Activated T-helper 2 cell treated with anti-CD3 and anti-CD28 coated beads, Interferon-gamma antibody, Interleukin-2, Interleukin-4, amounts not matched to agents 10 μg/mL and 5 μg/mL and 100 μg/mL, durations not matched to agents 14 hours and 24 hours and 36 hours (primary cell): ENCODE measurements at regions of chr13 and their contacts with region 1.

Region 1: DNA sequence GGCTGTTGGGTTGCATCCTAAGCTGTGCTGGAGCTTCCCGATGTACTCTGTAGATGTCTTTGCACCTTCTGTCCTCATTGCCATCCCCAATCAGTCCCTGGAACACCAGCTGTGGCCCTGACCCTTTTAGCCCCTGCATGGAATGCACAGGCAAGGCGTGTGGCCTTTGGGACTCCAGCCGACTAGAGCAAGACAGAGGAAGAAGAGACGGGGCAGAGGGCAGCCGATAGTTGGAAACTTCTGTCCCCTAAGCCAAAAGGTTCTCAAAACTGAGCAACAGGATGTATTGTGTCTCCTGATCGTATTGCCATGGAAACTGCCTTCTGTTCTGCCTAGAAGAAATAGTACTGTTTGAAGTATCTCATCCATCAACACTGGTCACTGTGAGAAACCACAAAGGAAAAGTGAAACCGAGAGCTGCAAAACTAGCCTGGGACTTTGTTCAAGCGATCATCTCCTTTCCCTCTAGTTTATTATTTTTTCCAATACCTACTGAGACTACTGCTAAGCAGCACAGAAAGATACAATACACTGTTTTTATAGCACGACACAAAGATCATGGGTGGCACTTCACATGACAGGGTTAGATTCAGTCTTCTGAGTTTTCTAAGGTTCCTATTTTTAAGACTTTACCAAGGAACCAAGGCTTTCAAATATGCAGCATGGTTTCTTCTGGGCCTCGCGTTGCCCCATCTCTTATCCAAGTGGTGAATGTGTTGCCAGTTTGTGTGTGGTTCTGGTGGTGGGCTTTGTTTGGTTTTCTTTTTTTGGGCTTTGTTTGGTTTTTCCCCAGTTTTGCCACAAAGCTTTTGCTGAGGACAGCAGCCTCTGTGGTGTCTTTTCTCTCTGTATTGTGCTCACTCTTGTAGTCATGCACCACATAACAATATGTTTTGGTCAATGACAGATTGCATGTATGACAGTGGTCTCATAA is 49.2 kb upstream of the GPR183 start:
- DNase-seq: peak; percentile 74
- H3K4me3 Mint-ChIP-seq: peak overlapping the region; percentile 50
- H3K27ac Mint-ChIP-seq: peak overlapping the region; percentile 98
- H3K4me1 Mint-ChIP-seq: peaks cover 92% of the 10 kb centered on the region
- H3K27me3 Mint-ChIP-seq: no peaks in the 10 kb centered on the region

Region 2: GRCh38 chr13:99153219-99153618 is 203.2 kb before region 1 on chr13:
- intact Hi-C with region 1: no loop called
- DNase-seq: no peak
- H3K4me3 Mint-ChIP-seq: no peak overlapping the region
- H3K27ac Mint-ChIP-seq: no peak overlapping the region
- H3K4me1 Mint-ChIP-seq: peaks cover 11% of the 10 kb centered on the region
- H3K27me3 Mint-ChIP-seq: no peaks in the 10 kb centered on the region

Region 3: DNA sequence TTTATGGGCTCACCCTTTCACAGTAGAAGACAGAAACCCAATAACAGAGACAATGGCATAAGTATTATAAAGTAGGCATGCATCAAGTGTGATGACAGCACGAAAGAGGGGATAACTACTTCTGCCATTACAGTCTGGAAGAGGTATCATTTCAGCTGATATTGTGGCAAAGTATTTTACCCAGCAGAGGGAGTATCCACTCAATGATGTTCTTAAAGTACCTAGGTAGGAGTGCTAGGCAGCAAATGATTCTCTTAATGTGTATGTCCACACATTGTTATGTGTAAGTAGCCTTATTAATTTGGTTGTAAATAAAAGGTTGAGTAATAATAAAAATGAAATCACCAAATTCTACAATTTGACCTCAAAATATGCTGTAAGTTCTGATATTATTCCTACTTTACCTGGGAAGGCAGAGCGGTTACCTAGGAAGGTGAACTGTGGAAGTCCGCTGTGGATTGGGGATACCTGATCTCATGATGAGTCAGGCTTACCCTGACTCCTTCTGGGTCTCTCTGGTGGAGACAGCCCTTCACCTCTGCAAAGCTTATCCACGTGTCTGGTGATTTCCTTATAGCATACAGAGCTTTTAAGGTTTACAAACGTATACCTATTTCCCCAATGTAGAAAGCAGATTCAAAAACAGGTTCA is 159.8 kb before region 1 on chr13:
- intact Hi-C with region 1: no loop called
- DNase-seq: no peak
- H3K4me3 Mint-ChIP-seq: no peak overlapping the region
- H3K27ac Mint-ChIP-seq: no peak overlapping the region
- H3K4me1 Mint-ChIP-seq: peaks cover 26% of the 10 kb centered on the region
- H3K27me3 Mint-ChIP-seq: no peaks in the 10 kb centered on the region

Region 4: GRCh38 chr13:99214232-99214631 is 142.2 kb before region 1 on chr13:
- intact Hi-C with region 1: loop called (anchors 2 kb)
- DNase-seq: no peak
- H3K4me3 Mint-ChIP-seq: peak overlapping the region; percentile 67
- H3K27ac Mint-ChIP-seq: peak overlapping the region; percentile 93
- H3K4me1 Mint-ChIP-seq: peaks cover 61% of the 10 kb centered on the region
- H3K27me3 Mint-ChIP-seq: no peaks in the 10 kb centered on the region

Region 5: GRCh38 chr13:99288089-99288488 is 68.3 kb before region 1 on chr13:
- intact Hi-C with region 1: loop called (anchors 1 kb)
- DNase-seq: peak; percentile 38
- H3K4me3 Mint-ChIP-seq: peak overlapping the region; percentile 3
- H3K27ac Mint-ChIP-seq: peak overlapping the region; percentile 80
- H3K4me1 Mint-ChIP-seq: peaks cover 75% of the 10 kb centered on the region
- H3K27me3 Mint-ChIP-seq: no peaks in the 10 kb centered on the region

Region 6: GRCh38 chr13:99307648-99308339 is 48.6 kb before region 1 on chr13:
- intact Hi-C with region 1: loop called (anchors 1 kb)
- DNase-seq: peak; percentile 64
- H3K4me3 Mint-ChIP-seq: peak overlapping the region; percentile 98
- H3K27ac Mint-ChIP-seq: peak overlapping the region; percentile 89
- H3K4me1 Mint-ChIP-seq: peaks cover 66% of the 10 kb centered on the region
- H3K27me3 Mint-ChIP-seq: no peaks in the 10 kb centered on the region

Region 7: DNA sequence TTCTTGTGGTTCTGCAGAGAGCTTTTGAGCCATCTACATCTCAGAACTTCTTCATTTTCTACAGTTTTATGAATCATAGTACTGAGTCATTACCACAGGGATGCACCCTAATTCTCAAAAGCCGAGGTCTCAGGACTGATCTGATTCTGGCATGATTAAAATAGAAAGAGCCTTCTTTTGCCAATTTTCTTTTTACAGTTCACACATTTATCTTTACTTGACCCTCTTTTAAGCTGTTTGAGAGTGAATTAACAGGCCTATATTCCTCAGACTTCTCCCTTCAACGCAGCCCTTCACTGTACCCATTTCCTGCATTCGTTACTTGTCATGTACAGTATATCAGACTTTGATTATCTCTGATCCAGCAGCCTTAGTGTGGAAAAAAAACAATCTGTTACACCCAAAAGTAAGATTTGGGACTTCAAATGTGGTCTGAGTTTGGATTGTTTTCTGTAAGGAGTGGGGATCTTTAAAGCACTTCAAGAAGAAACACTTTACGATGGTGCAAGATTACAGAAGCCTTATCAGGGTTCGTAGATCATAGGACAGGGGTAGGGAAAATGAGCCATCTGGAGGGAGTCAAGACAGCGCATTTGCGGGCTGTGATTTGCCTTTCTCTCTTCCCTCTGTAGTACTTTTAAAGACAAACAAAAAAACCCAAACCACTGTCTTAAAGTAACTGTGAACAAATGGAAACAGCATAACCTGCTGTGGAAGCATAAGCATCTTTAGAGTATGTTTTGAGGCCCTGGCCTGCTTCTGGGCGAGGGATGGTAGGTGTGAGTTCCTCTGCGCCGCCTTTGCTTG is 33.9 kb before region 1 on chr13:
- intact Hi-C with region 1: loop called (anchors 1 kb)
- DNase-seq: peak; percentile 44
- H3K4me3 Mint-ChIP-seq: peak overlapping the region; percentile 31
- H3K27ac Mint-ChIP-seq: peak overlapping the region; percentile 96
- H3K4me1 Mint-ChIP-seq: peaks cover 60% of the 10 kb centered on the region
- H3K27me3 Mint-ChIP-seq: no peaks in the 10 kb centered on the region

Region 8: DNA sequence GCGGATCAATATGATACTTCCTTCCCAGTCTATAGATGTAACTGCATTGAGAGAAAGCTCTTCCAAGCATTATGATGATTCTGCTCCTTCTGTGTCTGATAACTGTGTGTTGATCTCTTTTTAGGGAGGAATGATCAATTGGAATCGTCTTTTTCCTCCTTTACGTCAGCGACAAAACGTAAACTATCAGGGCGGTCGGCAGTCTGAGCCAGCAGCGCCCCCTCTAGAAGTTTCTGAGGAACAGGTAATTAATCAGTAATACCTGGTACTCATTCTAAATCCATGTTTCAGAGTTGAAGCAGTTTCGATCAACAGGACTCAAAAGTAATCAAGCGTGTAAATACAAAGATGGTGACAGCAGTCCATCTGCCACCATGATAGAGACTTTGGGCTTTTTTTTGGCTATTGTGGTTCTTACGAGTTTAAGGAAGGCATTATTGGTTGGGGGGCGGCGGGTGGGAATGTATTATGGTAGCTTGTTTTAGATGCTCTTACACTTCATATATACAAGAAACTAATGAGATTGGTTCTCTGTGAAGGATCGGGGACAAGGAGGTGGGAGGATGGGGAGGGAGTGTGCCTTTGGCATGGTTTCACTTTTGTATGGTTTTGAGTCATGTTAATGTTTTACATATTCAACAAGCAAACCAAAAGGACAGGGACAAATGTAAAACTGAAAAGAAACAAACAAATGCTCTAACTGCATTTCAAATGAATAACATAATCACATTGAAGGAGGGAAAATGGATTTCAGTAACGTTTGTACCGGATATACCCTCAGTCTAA is 11.4 kb after region 1 on chr13:
- intact Hi-C with region 1: loop called (anchors 1 kb)
- DNase-seq: no peak
- H3K4me3 Mint-ChIP-seq: peak overlapping the region; percentile 43
- H3K27ac Mint-ChIP-seq: peak overlapping the region; percentile 56
- H3K4me1 Mint-ChIP-seq: peaks cover 73% of the 10 kb centered on the region
- H3K27me3 Mint-ChIP-seq: no peaks in the 10 kb centered on the region

Region 9: DNA sequence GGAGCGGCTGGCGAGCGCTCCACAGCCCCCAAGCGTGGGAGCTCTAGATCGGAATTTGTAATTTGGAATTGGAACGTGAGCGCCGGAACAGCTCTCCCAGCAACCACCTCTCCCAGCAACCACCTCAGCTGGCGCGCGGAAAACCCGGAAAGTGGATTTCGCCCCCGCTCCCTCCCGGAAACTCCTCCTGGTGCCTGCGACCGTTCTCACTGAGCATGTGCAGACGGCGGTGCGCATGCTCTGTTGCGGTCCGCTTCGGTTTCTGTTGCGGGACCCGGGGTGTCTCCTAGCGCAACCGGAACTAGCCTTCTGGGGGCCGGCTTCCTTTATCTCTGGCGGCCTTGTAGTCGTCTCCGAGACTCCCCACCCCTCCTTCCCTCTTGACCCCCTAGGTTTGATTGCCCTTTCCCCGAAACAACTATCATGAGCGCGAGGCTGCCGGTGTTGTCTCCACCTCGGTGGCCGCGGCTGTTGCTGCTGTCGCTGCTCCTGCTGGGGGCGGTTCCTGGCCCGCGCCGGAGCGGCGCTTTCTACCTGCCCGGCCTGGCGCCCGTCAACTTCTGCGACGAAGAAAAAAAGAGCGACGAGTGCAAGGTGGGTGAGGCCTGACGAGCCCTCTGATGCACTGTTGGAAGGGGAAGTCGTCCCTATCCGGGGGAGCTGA is 144.9 kb after region 1 on chr13 and contains the start of gene TM9SF2:
- intact Hi-C with region 1: loop called (anchors 1 kb)
- DNase-seq: peak; percentile 97
- H3K4me3 Mint-ChIP-seq: peak within 1 kb of the TSS; percentile 89
- H3K27ac Mint-ChIP-seq: peak within 1 kb of the TSS; percentile 86
- H3K4me1 Mint-ChIP-seq: peaks cover 56% of the 10 kb centered on the region
- H3K27me3 Mint-ChIP-seq: no peaks in the 10 kb centered on the region
- total RNA-seq, gene TM9SF2: 77.5 and 78.5 TPM in 2 replicates

Region 10: DNA sequence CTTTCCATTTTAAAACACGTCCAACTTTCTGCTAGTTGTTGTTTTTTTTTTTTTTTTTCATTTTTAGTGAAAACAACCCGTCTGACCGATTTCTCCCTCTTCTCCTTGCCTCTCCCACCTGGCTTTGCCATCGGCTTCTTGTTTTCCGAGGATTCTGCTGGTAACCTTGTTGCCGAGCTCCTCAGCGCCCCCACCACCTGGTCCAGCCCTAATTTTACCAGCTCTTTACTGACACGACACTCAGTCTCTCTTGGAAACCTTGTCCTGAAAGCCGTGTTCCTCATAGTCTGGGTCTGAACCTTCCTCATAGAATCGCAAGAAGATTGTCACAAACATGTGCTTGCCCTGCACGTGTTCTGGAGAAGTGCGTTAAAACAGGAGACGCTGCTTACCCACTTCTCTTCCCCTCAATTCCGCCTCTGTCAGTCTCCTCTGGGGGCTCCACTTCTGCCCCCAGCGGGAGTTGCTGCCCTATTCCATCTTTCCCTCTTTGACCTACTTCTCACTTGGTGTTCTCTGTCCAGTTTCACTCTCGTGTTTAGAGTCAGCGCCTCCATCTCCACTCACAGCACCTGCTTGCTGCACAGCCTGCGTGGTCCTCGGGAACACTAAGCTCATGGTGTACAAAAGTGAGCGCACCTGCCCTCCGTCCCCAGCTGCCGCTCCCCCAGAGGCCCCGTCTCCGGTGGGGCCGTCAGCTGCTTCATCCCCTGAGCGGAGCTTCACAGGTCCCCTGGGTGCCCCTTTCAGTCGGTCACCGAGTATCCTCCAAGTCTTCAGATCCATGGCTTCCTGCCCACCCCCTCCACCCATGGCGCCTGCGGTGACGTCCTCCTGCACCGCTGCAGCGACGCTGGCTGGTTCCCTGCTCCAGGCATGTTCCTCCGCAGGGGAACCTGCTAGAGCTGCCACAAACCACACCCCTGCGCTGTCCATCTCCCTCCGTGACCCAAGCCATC is 210.0 kb after region 1 on chr13:
- intact Hi-C with region 1: no loop called
- DNase-seq: no peak
- H3K4me3 Mint-ChIP-seq: peak overlapping the region; percentile 19
- H3K27ac Mint-ChIP-seq: no peak overlapping the region
- H3K4me1 Mint-ChIP-seq: no peaks in the 10 kb centered on the region
- H3K27me3 Mint-ChIP-seq: no peaks in the 10 kb centered on the region

Region 11: DNA sequence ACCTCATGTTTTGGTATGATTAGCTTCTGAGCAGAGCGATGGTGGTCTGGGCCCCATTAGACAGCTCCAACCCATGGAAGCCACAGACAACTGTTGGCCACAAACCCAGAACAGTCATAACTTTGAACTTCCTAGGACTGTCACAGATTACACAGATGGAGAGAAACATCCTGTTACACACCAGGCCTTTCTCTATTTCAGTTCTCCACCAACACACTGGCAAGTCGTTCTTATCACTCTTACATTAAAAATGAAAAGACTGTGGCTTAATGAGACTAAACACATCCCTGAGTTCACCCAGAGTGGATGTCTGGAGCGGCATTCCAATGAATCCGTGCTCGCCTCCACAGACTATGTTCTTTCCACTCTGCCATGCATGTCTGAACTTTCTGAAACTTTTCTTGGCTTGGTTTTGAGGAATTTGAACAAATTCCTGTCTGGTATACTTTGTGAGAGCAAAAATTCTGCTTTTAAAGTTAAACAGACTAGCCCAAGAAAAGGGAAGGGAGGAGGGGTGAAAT is 1950.8 kb after region 1 on chr13:
- intact Hi-C with region 1: no loop called
- DNase-seq: no peak
- H3K4me3 Mint-ChIP-seq: no peak overlapping the region
- H3K27ac Mint-ChIP-seq: no peak overlapping the region
- H3K4me1 Mint-ChIP-seq: no peaks in the 10 kb centered on the region
- H3K27me3 Mint-ChIP-seq: no peaks in the 10 kb centered on the region